Activated CD8-positive, alpha-beta T cell treated with anti-CD3 and anti-CD28 coated beads, Interleukin-2, amount 10 ng/mL, durations not matched to agents 7 days and 5 days (primary cell): ENCODE measurements at regions of chrX and their contacts with region 1.

Region 1: DNA sequence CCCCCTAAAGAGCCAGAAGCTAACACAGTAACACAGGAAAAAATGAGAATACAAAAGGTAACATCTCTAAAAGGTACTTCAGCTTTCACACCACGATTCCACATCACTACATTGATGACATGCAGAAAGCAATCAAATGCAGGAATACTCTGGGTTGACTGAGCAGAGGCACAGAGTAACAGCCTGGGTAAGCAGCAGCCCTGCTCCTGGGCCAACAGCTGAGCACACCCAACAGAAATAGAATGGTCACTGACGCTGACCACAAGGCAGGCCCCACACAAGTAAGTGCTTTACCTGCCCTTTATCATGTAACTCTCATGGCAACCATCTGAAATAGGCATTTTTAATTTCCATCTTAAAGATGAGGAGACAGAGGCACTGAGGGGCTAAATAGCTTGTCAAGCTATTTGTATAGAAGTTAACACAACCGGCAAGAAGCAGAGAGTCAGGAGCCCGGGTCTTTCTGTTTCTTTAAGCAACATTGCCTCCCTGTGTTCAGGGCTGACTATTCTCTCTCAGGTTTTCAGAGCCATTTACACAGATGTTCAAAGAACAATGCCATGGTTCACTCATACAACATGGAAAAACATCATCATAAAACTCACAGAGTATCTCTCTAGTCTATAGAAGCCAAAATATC is 168.9 kb downstream of the ZNF674 start:
- DNase-seq: peak; percentile 28
- ATAC-seq: no peak
- H3K4me3 Mint-ChIP-seq: no peak overlapping the region
- H3K27ac Mint-ChIP-seq: no peak overlapping the region
- H3K4me1 Mint-ChIP-seq: no peaks in the 10 kb centered on the region
- H3K27me3 Mint-ChIP-seq: peaks cover 3% of the 10 kb centered on the region

Region 2: DNA sequence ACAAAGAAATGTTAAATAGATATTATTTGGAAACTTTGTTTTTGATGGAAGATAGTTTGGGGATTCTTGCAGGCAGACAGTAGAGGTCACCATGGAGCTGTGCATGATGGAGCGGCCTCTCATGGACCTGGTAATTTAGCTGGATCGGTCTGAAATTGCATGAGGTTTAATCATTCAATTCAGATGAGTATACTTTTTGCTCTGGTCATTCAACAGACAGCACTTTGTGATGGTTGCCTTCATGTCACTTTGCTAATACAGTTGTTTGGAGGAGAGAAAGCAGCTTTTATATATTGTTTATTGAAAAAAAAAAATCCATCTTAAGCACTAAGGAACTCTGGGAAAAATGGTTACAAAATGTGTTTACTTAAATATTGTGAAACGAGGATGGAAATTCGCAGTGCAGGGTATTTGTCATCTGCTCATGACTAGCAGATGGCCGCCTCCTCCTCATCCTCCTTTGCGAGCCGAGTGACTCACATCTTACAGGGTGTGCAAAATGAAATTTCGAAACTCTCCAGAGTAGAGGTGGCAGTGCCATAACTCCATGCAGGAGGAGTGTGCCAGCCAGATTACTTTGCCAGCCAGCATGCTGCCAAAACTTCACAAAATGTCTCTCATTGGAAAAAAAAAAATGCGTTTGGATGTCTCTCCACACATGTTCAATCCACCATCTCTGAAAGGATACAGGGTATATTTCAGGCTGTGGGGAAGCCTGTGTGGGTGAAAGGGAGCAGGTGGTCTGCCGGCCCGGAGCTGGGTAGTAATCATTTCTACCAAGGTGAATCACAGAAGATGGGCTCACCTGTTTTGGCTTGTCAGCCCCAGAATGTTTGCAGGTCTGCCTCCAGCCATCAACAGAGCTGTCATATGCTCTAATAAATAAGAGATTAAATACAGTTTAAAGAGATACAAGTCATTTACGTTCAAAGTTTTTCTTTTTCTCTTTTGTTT is 860.8 kb before region 1 on chrX:
- CTCF ChIA-PET with region 1: interaction called, 12 read pairs
- POLR2A ChIA-PET with region 1: no interaction called
- DNase-seq: peak; percentile 49
- ATAC-seq: no peak
- H3K4me3 Mint-ChIP-seq: no peak overlapping the region
- H3K27ac Mint-ChIP-seq: no peak overlapping the region
- H3K4me1 Mint-ChIP-seq: peaks cover 9% of the 10 kb centered on the region
- H3K27me3 Mint-ChIP-seq: no peaks in the 10 kb centered on the region

Region 3: GRCh38 chrX:46408553-46409407 is 32.4 kb after region 1 on chrX:
- CTCF ChIA-PET with region 1: interaction called, 13 read pairs
- POLR2A ChIA-PET with region 1: no interaction called
- DNase-seq: peak; percentile 68
- ATAC-seq: no peak
- H3K4me3 Mint-ChIP-seq: no peak overlapping the region
- H3K27ac Mint-ChIP-seq: no peak overlapping the region
- H3K4me1 Mint-ChIP-seq: no peaks in the 10 kb centered on the region
- H3K27me3 Mint-ChIP-seq: peaks cover 4% of the 10 kb centered on the region